ENCODE measurements at regions of chr6 and their contacts with region 1.

Region 1: GRCh38 chr6:24283043-24283985 is 74.5 kb downstream of the DCDC2 start:
- DNase-seq: peak; percentile 90
- ATAC-seq: peak; percentile 99
- H3K4me3 ChIP-seq: peak overlapping the region in 2 of 3 experiments; percentile 12 to 19; a peak in 2 of 6 replicates
- H3K27ac ChIP-seq: peak overlapping the region; percentile 43
- H3K4me1 ChIP-seq: peaks cover 38% of the 10 kb centered on the region
- H3K27me3 ChIP-seq: no peaks in the 10 kb centered on the region
- CTCF ChIP-seq: peak; percentile 94
- EP300 ChIP-seq: 0 out of 4 replicates have a peak, but pooled peaks of 1 of the 2 experiments have one; percentile 26
- POLR2A ChIP-seq: no peak
- RAD21 ChIP-seq: peak; percentile 91

Region 2: GRCh38 chr6:24060982-24061754 is 222.1 kb before region 1 on chr6:
- CTCF ChIA-PET with region 1: no interaction called
- POLR2A ChIA-PET with region 1: no interaction called
- in situ Hi-C with region 1: no loop called
- intact Hi-C with region 1: no loop called
- DNase-seq: no peak
- ATAC-seq: no peak
- H3K4me3 ChIP-seq: no peak overlapping the region
- H3K27ac ChIP-seq: no peak overlapping the region
- H3K4me1 ChIP-seq: no peaks in the 10 kb centered on the region; the same call in 1 of the 2 replicates
- H3K27me3 ChIP-seq: no peaks in the 10 kb centered on the region
- CTCF ChIP-seq: no peak
- EP300 ChIP-seq: no peak
- POLR2A ChIP-seq: no peak
- RAD21 ChIP-seq: no peak

Region 3: DNA sequence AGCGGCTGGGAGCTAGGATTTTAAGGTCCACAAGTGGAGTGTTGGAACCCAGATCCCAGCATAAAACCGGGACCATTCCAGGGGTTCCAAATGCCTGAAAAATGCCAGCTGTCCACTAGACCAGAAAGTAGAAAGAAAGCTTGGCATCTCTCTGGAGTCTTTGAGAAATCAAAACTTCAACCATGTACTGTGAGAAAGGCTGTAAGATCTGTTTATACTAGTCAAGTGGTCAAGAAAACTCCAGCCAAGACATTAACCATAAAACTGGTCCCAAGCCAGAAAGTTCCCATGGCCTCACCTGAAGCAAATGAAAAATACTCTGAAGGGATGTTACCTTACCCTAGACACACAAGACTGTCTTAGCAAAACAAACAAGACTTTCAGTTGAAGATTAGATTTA is 38.0 kb before region 1 on chr6:
- CTCF ChIA-PET with region 1: no interaction called
- POLR2A ChIA-PET with region 1: no interaction called
- in situ Hi-C with region 1: no loop called
- intact Hi-C with region 1: no loop called
- DNase-seq: no peak
- ATAC-seq: no peak
- H3K4me3 ChIP-seq: no peak overlapping the region
- H3K27ac ChIP-seq: no peak overlapping the region
- H3K4me1 ChIP-seq: peaks cover 17% of the 10 kb centered on the region
- H3K27me3 ChIP-seq: no peaks in the 10 kb centered on the region
- CTCF ChIP-seq: no peak
- EP300 ChIP-seq: no peak
- POLR2A ChIP-seq: no peak
- RAD21 ChIP-seq: no peak

Region 4: DNA sequence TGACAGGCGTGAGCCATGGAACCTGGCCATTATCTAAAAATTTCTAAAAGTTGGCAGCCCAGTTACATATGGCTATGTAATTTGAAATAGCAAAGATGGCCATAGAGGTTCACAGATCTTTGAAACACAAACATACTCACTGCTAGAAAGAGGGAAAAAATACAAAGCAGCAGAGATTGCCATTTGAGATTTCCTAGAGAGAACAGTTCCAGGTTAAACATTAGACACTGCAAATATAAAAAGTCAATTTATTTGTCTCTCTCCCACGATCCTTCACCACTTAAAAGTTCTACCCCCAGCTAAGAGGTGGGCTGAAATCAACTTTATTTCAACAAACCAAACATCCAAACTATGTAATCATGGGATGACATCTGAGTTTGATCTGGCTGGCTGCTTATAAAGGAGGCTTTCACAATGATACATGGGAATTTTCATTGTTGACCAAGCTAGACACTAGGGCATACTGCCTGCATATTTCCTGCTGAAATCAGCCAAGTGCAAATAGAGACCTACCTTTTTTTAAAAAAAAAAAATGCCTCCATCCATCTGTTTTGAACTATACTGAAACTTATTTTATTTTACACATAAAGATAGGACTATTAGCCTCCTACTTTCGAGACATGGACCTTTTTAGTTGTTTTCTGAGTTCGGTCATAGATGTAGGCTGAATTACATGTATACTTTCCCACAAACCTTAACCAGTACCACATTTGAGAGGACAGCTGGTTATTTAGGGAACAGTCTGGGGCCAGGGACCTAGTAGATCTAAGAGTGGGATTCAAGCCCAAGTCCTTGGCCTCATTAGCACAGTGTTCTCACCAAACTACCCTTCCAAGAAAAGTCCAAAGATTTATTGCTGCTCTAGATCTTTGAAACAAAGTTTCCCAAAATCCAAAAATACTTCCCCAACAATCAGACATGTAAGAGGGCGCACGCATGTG is 58.0 kb after region 1 on chr6:
- CTCF ChIA-PET with region 1: interaction called, 3 read pairs
- POLR2A ChIA-PET with region 1: no interaction called
- in situ Hi-C with region 1: no loop called
- intact Hi-C with region 1: loop called (anchors 1 kb)
- DNase-seq: peak; percentile 100
- ATAC-seq: peak; percentile 99
- H3K4me3 ChIP-seq: peak overlapping the region in 1 of 3 experiments; percentile 8; a peak in 1 of 6 replicates
- H3K27ac ChIP-seq: peak overlapping the region; percentile 70
- H3K4me1 ChIP-seq: peaks cover 58% of the 10 kb centered on the region
- H3K27me3 ChIP-seq: no peaks in the 10 kb centered on the region
- CTCF ChIP-seq: no peak
- EP300 ChIP-seq: peak; percentile 69 to 96; a peak in 3 of 4 replicates
- POLR2A ChIP-seq: no peak
- RAD21 ChIP-seq: 0 out of 2 replicates have a peak, but pooled peaks have one; percentile 7

Region 5: GRCh38 chr6:24385536-24386269 is 102.4 kb after region 1 on chr6:
- CTCF ChIA-PET with region 1: interaction called, 112 read pairs
- POLR2A ChIA-PET with region 1: interaction called, 10 read pairs
- in situ Hi-C with region 1: loop called (anchors 5 kb)
- intact Hi-C with region 1: loop called (anchors 1 kb)
- DNase-seq: peak; percentile 98
- ATAC-seq: peak; percentile 83
- H3K4me3 ChIP-seq: peak overlapping the region in 1 of 3 experiments; percentile 34; a peak in 1 of 6 replicates
- H3K27ac ChIP-seq: peak overlapping the region; percentile 79
- H3K4me1 ChIP-seq: peaks cover 84% of the 10 kb centered on the region
- H3K27me3 ChIP-seq: no peaks in the 10 kb centered on the region
- CTCF ChIP-seq: peak; percentile 87
- EP300 ChIP-seq: peak; percentile 94 to 98
- POLR2A ChIP-seq: no peak
- RAD21 ChIP-seq: peak; percentile 63

Region 6: GRCh38 chr6:24431045-24431451 is 147.7 kb after region 1 on chr6:
- CTCF ChIA-PET with region 1: interaction called, 8 read pairs
- POLR2A ChIA-PET with region 1: no interaction called
- in situ Hi-C with region 1: no loop called
- intact Hi-C with region 1: loop called (anchors 1 kb)
- DNase-seq: peak; percentile 65
- ATAC-seq: peak; percentile 82
- H3K4me3 ChIP-seq: no peak overlapping the region
- H3K27ac ChIP-seq: no peak overlapping the region
- H3K4me1 ChIP-seq: no peaks in the 10 kb centered on the region
- H3K27me3 ChIP-seq: no peaks in the 10 kb centered on the region
- CTCF ChIP-seq: peak; percentile 76
- EP300 ChIP-seq: no peak
- POLR2A ChIP-seq: no peak
- RAD21 ChIP-seq: peak; percentile 56; the same call in 1 of the 2 replicates

Region 7: GRCh38 chr6:24520929-24521546 is 237.7 kb after region 1 on chr6:
- CTCF ChIA-PET with region 1: no interaction called
- POLR2A ChIA-PET with region 1: no interaction called
- in situ Hi-C with region 1: no loop called
- intact Hi-C with region 1: loop called (anchors 1 kb)
- DNase-seq: peak; percentile 62
- ATAC-seq: peak; percentile 100
- H3K4me3 ChIP-seq: no peak overlapping the region
- H3K27ac ChIP-seq: no peak overlapping the region
- H3K4me1 ChIP-seq: no peaks in the 10 kb centered on the region; the same call in 1 of the 2 replicates
- H3K27me3 ChIP-seq: no peaks in the 10 kb centered on the region
- CTCF ChIP-seq: peak; percentile 93
- EP300 ChIP-seq: no peak
- POLR2A ChIP-seq: no peak
- RAD21 ChIP-seq: peak; percentile 87

Measured in HepG2 (cell line).